ENCODE measurements at regions of chr12 and their contacts with region 1.

Region 1: GRCh38 chr12:30847259-30847658 is 79.3 kb upstream of the TSPAN11 start:
- DNase-seq: peak in 4 of 14 experiments; percentile 23 to 77 (median 72)
- ATAC-seq: no peak
- H3K4me3 ChIP-seq: no peak overlapping the region
- H3K4me3 Mint-ChIP-seq: no peak overlapping the region
- H3K27ac ChIP-seq: no peak overlapping the region
- H3K27ac Mint-ChIP-seq: no peak overlapping the region
- H3K4me1 ChIP-seq: peaks cover 10% of the 10 kb centered on the region
- H3K4me1 Mint-ChIP-seq: no peaks in the 10 kb centered on the region
- H3K27me3 ChIP-seq: no peaks in the 10 kb centered on the region
- H3K27me3 Mint-ChIP-seq: no peaks in the 10 kb centered on the region
- CTCF ChIP-seq: peak; percentile 65

Region 2: DNA sequence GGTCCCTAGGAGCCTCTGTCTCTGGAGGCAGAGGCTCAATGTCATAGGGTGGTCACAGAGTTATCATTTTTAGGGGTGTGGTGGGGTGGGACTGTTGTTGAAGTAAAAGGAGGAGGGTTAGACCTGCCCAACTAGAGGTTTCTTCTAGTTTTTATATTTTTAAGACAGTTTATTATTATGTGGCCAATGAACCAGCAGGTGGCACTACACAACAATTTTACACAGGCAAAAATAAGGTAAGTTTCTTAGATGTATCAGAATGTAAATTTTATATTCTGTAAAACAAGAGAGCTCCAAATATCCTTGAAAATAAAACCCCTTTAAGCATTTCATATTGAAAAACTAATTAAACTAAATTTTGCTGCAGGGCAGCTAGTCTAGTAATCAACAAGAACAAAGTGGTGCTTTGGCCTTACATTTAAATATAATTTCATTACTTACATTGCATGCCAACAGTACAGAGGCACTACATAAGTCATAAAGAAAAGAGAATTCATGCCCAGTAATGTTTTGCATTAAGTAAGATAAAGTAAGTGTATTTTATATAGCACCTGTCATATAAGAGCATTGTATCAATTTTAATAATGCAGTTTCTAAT is 1327.6 kb before region 1 on chr12:
- CTCF ChIA-PET with region 1: no interaction called
- POLR2A ChIA-PET with region 1: no interaction called
- intact Hi-C with region 1: loop called (anchors 2 kb)
- DNase-seq: peak in 5 of 14 experiments; percentile 1 to 58 (median 39)
- ATAC-seq: no peak
- H3K4me3 ChIP-seq: no peak overlapping the region
- H3K4me3 Mint-ChIP-seq: no peak overlapping the region
- H3K27ac ChIP-seq: no peak overlapping the region
- H3K27ac Mint-ChIP-seq: no peak overlapping the region
- H3K4me1 ChIP-seq: no peaks in the 10 kb centered on the region
- H3K4me1 Mint-ChIP-seq: no peaks in the 10 kb centered on the region
- H3K27me3 ChIP-seq: peaks cover 0 to 3% of the 10 kb centered on the region in 2 experiments
- H3K27me3 Mint-ChIP-seq: peaks cover 15% of the 10 kb centered on the region
- CTCF ChIP-seq: peak; percentile 72

Region 3: DNA sequence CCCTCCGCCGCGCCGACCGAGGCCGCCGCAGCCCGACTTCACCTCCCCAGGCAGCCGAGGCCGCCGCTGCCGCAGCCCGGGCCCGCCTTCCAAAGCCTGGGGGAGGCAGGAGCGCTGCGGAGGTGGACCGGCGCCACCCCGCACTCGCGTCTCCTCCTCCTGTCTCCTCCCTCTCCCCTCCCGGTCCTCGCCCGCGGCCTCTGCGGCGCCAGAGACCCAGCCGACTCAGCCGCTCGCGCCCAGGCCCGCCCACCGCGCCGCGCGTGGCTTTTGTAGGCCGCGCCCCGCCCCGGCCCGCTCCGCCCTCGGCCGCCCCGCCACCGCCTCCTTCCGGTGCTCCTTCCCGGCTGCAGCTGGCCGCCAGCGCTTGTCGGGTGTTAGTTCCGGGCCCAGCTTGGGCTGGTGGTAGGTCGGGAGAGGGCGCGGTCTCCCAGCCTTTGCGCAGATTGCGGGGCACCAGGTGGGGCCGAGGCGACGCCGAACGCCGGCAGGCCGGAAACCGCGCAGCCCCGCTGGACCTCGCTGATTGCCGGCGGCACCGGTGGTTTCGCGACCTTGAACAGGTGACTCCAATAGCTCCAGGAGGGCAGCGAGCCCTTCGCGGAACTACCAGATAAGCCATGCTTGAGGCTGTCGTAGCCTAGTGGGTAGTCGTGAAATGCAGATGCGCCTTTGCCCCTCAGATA is 92.4 kb before region 1 on chr12 and contains the start of gene CAPRIN2:
- CTCF ChIA-PET with region 1: interaction called, 3 read pairs
- POLR2A ChIA-PET with region 1: interaction called, 5 read pairs
- intact Hi-C with region 1: loop called in 1 of 2 experiments (anchors 5 kb)
- DNase-seq: peak; percentile 86 to 97 (median 94)
- ATAC-seq: peak; percentile 90
- H3K4me3 ChIP-seq: peak within 1 kb of the TSS; percentile 81
- H3K4me3 Mint-ChIP-seq: peak within 1 kb of the TSS; percentile 94
- H3K27ac ChIP-seq: peak within 1 kb of the TSS; percentile 51 to 76
- H3K27ac Mint-ChIP-seq: peak within 1 kb of the TSS; percentile 77
- H3K4me1 ChIP-seq: peaks cover 16% of the 10 kb centered on the region
- H3K4me1 Mint-ChIP-seq: peaks cover 45% of the 10 kb centered on the region
- H3K27me3 ChIP-seq: no peaks in the 10 kb centered on the region
- H3K27me3 Mint-ChIP-seq: no peaks in the 10 kb centered on the region
- CTCF ChIP-seq: peak; percentile 18
- total RNA-seq, gene CAPRIN2: 21.2 to 24.6 TPM

Region 4: GRCh38 chr12:30813525-30814294 is 33.5 kb before region 1 on chr12:
- CTCF ChIA-PET with region 1: no interaction called
- POLR2A ChIA-PET with region 1: no interaction called
- intact Hi-C with region 1: no loop called
- DNase-seq: no peak
- ATAC-seq: no peak
- H3K4me3 ChIP-seq: no peak overlapping the region
- H3K4me3 Mint-ChIP-seq: no peak overlapping the region
- H3K27ac ChIP-seq: no peak overlapping the region
- H3K27ac Mint-ChIP-seq: no peak overlapping the region
- H3K4me1 ChIP-seq: no peaks in the 10 kb centered on the region
- H3K4me1 Mint-ChIP-seq: no peaks in the 10 kb centered on the region
- H3K27me3 ChIP-seq: peaks cover 0 to 9% of the 10 kb centered on the region in 2 experiments
- H3K27me3 Mint-ChIP-seq: peaks cover 28% of the 10 kb centered on the region
- CTCF ChIP-seq: no peak

Region 5: DNA sequence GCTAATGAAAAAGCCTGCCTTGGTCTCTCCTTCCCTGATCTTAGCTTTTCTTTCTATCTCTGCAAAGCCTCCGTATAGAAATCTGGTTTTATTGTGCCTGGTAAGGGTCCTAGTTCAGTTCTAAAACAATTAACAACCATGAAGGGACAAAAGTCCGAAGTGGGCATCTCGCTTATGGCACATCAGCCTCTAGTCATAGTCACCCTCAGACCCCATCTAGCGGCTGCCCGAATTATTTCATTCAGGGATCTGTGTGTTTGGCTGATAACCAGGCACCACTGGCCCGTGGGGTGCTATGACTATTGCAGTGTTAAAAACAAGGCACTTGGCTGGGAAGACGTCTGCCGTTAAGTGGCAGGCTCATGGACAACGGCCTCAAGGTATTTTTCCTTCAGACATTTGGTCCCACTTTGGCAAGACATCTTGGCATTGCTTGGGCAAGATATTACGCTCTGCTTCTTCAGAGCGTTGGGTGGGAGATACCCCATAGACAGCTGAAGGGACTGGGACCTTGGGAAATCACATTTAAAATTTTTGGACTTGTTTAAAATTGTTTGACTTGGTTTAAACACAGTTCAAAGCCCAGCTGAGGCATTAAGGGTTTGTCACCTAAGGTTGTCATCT is 391.6 kb after region 1 on chr12:
- CTCF ChIA-PET with region 1: no interaction called
- POLR2A ChIA-PET with region 1: no interaction called
- intact Hi-C with region 1: loop called in 1 of 2 experiments (anchors 2 kb)
- DNase-seq: peak; percentile 23 to 57 (median 40)
- ATAC-seq: no peak
- H3K4me3 ChIP-seq: no peak overlapping the region
- H3K4me3 Mint-ChIP-seq: no peak overlapping the region
- H3K27ac ChIP-seq: no peak overlapping the region
- H3K27ac Mint-ChIP-seq: no peak overlapping the region
- H3K4me1 ChIP-seq: no peaks in the 10 kb centered on the region
- H3K4me1 Mint-ChIP-seq: peaks cover 4% of the 10 kb centered on the region
- H3K27me3 ChIP-seq: peaks cover 5 to 6% of the 10 kb centered on the region in 2 experiments
- H3K27me3 Mint-ChIP-seq: peaks cover 19% of the 10 kb centered on the region
- CTCF ChIP-seq: peak; percentile 61

Region 6: DNA sequence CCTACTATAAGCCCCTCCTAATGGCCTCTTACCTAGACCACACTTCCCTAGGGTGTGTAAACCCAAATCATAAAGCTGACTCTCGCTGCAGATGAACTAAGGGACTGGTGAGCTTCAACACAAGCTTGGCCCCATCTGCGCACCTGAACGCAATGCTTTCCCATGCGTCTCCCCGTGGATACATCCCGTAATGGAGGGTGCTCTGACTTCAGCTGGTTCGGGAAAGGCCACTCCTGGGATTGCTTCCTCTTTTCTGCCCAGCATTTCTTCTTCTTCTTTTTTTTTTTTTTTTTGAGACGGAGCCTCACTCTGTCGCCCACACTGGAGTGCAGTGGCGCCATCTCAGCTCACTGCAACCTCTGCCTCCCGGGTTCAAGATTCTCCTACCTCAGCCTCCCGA is 784.5 kb after region 1 on chr12:
- CTCF ChIA-PET with region 1: no interaction called
- POLR2A ChIA-PET with region 1: no interaction called
- intact Hi-C with region 1: loop called (anchors 5 kb)
- DNase-seq: peak in 2 of 14 experiments; percentile 19 to 21
- ATAC-seq: no peak
- H3K4me3 ChIP-seq: no peak overlapping the region
- H3K4me3 Mint-ChIP-seq: no peak overlapping the region
- H3K27ac ChIP-seq: no peak overlapping the region
- H3K27ac Mint-ChIP-seq: no peak overlapping the region
- H3K4me1 ChIP-seq: peaks cover 2% of the 10 kb centered on the region
- H3K4me1 Mint-ChIP-seq: peaks cover 6% of the 10 kb centered on the region
- H3K27me3 ChIP-seq: no peaks in the 10 kb centered on the region
- H3K27me3 Mint-ChIP-seq: peaks cover 4% of the 10 kb centered on the region
- CTCF ChIP-seq: no peak